Naive thymus-derived CD4-positive, alpha-beta T cell (primary cell): ENCODE measurements at regions of chr4 and their contacts with region 1.

Region 1: DNA sequence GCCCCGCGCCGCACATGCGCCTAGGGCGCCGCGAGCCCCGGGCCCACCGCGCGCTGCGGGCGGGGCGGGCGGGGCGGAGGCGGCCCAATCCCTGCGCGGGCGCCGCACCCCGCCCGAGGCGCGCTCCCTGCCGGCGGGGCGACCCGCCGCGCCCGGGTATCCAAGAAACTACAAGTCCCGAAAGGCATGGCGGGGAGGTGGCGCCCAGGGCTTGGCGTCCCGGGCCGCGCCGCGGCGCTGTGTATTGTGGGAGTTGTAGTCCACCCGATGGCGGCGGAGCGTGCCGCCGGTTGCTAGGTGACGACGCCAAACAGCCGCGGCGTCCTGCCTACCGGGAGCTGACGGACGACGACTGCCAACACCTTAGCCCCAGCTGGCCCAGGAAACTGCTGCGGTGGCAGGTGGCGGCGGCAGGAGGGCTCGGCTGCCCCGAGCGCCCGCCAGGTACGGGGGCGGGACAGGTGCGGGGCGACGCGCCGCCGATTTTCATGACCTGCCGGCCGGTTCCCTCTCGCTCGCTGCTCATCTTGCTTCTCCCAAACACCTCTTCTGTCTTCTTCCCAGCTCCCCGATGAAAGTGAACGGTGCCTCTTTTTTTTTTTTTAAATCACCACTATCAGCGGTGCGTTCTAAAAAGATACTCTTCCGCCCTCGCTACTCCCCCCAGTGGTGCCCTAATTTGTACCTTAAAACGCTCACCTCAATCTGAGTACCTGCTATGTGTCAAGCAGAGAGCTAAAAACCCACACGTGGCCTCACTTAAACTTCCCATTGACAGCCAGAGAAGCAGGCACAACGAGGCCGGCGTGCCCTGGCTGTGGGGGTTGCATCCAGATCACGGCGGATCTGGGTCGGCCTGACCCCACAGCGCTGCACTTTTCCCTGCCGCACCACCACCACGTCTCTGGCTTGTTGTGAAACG is at the start of gene CFAP99:
- DNase-seq: peak; percentile 89 to 97 (median 93)
- ATAC-seq: peak; percentile 95
- H3K4me3 ChIP-seq: peak within 1 kb of the TSS; percentile 70
- H3K4me3 Mint-ChIP-seq: peak within 1 kb of the TSS; percentile 85 to 98 (median 92)
- H3K27ac ChIP-seq: peak within 1 kb of the TSS; percentile 73
- H3K27ac Mint-ChIP-seq: peak within 1 kb of the TSS; percentile 81 to 98 (median 90)
- H3K4me1 ChIP-seq: peaks cover 24 to 28% of the 10 kb centered on the region in 2 donors
- H3K4me1 Mint-ChIP-seq: peaks cover 33 to 46% (median 40%) of the 10 kb centered on the region in 7 donors
- H3K27me3 ChIP-seq: no peaks in the 10 kb centered on the region
- H3K27me3 Mint-ChIP-seq: peaks cover 8 to 67% (median 13%) of the 10 kb centered on the region in 5 donors
- total RNA-seq, gene CFAP99: 0.12 to 0.27 TPM in 2 of 5 experiments, not detected in the others

Region 2: DNA sequence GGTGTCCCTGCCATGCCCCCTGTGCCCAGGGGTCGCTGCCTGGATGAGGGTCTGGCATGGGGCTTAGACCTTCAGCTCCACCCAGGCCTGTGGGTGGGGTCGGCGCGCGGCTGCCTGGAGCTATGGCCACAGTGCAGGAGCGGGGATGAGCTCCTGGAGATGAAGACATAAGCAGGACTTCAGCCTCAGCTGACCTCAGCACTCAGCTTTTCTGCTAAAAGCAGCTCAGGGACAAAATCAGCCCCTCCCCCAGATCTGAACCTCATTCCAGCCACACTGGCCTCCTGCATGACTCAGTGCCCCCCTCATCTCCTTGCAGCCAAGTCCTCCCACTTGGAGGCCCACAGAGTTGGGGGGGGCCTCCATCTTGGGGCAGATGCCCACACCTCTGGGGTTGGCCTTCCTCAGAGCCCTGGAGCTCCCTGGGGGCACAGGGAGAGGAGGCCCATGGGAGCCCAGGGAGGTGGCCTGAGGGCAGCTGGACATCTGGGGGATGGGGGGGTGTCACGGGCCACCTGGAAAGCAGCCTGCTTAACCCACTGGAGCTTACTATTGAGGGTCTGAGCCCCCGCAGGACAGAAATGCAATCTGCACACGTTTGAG is 1573.6 kb before region 1 on chr4:
- CTCF ChIA-PET with region 1: no interaction called
- POLR2A ChIA-PET with region 1: no interaction called
- intact Hi-C with region 1: no loop called
- DNase-seq: no peak
- ATAC-seq: no peak
- H3K4me3 ChIP-seq: no peak overlapping the region
- H3K4me3 Mint-ChIP-seq: no peak overlapping the region
- H3K27ac ChIP-seq: no peak overlapping the region
- H3K27ac Mint-ChIP-seq: no peak overlapping the region
- H3K4me1 ChIP-seq: no peaks in the 10 kb centered on the region
- H3K4me1 Mint-ChIP-seq: no peaks in the 10 kb centered on the region
- H3K27me3 ChIP-seq: no peaks in the 10 kb centered on the region
- H3K27me3 Mint-ChIP-seq: no peaks in the 10 kb centered on the region

Region 3: DNA sequence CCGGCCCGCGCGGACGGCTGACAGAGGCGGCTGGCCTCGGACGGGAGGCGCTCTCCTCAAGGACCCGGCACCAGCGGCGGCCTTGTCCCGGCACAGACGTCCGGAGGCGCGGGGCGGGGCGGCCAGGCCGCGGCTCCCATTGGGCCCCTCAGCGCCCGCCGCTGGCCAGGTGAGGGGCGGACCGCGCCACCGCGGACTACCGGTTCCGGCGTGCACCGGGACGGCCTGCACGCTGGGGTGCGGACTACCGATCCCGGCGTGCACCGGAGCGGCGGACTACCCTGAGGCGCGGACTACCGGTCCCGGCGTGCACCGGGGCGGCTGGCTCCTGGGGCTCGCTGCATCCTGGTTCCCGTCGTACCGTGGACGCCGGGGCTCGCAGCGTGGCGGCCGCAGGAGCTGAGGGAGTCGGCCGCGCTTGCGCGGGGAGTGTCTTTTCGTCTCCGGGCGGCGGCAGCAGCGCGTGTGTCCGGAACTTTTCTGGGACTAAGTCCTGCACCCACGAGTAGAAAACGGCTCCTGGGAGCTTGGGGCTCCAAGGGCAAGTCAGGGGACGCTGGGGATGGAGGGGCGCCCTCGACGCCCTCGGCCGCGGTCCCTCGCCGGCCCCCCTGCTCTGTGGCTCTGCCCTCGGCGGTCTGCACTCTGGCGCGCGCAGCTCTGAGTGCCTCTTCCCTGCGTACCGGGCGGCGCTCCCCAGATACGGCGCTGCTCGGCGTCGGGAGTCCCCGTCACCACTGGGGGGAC is 562.7 kb before region 1 on chr4 and contains the start of gene LETM1:
- CTCF ChIA-PET with region 1: no interaction called
- POLR2A ChIA-PET with region 1: interaction called, 3 read pairs
- intact Hi-C with region 1: loop called (anchors 1 kb)
- DNase-seq: peak; percentile 79 to 96 (median 88)
- ATAC-seq: peak; percentile 98
- H3K4me3 ChIP-seq: peak within 1 kb of the TSS; percentile 86
- H3K4me3 Mint-ChIP-seq: peak within 1 kb of the TSS; percentile 67 to 88 (median 83)
- H3K27ac ChIP-seq: peak within 1 kb of the TSS; percentile 70
- H3K27ac Mint-ChIP-seq: peak within 1 kb of the TSS in 8 of 9 donors; percentile 17 to 80 (median 48)
- H3K4me1 ChIP-seq: peaks cover 10 to 14% of the 10 kb centered on the region in 2 donors
- H3K4me1 Mint-ChIP-seq: peaks cover 31 to 45% (median 41%) of the 10 kb centered on the region in 7 donors
- H3K27me3 ChIP-seq: no peaks in the 10 kb centered on the region
- H3K27me3 Mint-ChIP-seq: no peaks in the 10 kb centered on the region
- total RNA-seq, gene LETM1: 29.5 to 56.4 (median 36.0) TPM

Region 4: DNA sequence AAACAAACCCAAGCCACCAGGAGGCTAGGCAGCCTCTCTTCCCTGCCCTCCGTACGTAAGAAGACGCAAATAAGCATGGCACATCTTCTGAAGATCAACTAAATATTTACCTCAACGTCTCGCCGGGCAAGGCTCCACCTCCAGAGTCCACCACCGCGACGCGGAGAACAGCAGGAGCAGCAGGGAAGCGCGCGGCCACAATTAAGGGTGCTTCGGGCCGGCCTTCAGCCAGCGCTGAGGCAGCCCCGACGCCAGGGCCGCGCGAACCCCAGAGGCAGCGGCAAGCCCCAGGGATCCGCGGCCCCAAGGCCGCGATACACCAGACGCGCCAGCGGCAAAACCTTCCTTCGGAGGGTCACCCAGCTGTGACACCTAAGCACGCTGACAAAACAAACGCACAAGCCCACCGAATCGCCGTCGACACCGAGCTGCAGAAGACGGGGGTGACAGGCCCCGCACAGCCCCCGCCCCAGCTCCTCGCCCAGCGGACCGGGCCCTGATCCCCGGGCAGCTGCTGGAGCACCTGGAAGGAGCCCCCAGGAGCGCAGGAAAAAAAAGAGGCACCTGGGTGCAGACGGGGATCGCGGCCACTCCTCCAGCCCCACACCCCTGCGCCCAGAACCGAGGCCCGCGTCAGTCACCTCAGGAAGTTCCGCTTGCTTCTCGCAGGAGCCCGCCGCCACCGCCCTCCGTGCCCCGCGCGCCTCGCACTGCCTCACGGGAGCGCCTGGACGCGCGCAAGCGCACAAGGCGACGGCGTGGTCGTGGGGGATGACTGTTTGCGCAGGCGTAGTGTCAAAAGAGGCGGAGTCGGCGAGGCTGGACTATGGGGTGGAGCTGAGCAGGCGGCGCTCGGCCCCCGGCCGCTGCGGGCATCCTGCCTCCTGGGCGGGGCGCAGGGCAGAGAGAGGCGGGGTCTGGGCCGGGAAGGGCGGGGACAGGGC is 177.2 kb before region 1 on chr4 and contains the starts of genes HAUS3 and POLN:
- CTCF ChIA-PET with region 1: no interaction called
- POLR2A ChIA-PET with region 1: interaction called, 4 read pairs
- intact Hi-C with region 1: loop called (anchors 1 kb)
- DNase-seq: peak; percentile 96 to 100 (median 99)
- ATAC-seq: peak; percentile 97
- H3K4me3 ChIP-seq: peak within 1 kb of the TSS; percentile 93
- H3K4me3 Mint-ChIP-seq: peak within 1 kb of the TSS; percentile 80 to 95 (median 91)
- H3K27ac ChIP-seq: peak within 1 kb of the TSS; percentile 89
- H3K27ac Mint-ChIP-seq: peak within 1 kb of the TSS; percentile 83 to 95 (median 90)
- H3K4me1 ChIP-seq: peaks cover 37 to 38% of the 10 kb centered on the region in 2 donors
- H3K4me1 Mint-ChIP-seq: peaks cover 48 to 65% (median 60%) of the 10 kb centered on the region in 7 donors
- H3K27me3 ChIP-seq: no peaks in the 10 kb centered on the region
- H3K27me3 Mint-ChIP-seq: peaks cover 0 to 6% (median 0%) of the 10 kb centered on the region in 5 donors
- total RNA-seq, gene HAUS3: 24.4 to 88.2 (median 34.1) TPM
- total RNA-seq, gene POLN: 2.4 to 5.4 (median 3.2) TPM

Region 5: DNA sequence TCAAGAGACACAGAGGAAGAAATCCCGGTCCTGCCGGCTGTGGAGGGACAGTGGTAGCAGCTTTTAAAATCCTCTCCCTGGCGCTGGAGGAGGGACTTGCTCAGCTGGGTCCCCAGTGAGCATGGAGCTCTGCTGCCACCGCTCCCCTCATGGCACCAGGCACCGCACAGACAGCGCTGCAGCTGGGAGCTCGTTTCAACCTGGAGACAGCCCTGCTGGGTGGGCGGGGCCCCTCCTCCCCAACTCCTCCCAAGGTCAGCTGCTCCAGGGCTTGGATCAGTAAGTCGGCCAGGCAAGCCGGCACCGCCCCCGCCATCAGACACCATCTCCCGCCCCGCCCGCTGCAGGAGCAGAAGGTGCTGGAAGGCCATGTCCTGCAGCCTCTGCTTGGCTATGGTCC is 16.9 kb before region 1 on chr4:
- CTCF ChIA-PET with region 1: interaction called, 3 read pairs
- POLR2A ChIA-PET with region 1: interaction called, 27 read pairs
- intact Hi-C with region 1: loop called in 1 of 2 experiments (anchors 2 kb)
- DNase-seq: peak in 2 of 9 donors; percentile 19 to 26
- ATAC-seq: peak; percentile 59
- H3K4me3 ChIP-seq: peak overlapping the region; percentile 53
- H3K4me3 Mint-ChIP-seq: peak overlapping the region; percentile 55 to 87 (median 83)
- H3K27ac ChIP-seq: no peak overlapping the region
- H3K27ac Mint-ChIP-seq: peak overlapping the region in 5 of 9 donors; percentile 43 to 86 (median 75)
- H3K4me1 ChIP-seq: peaks cover 16% of the 10 kb centered on the region in 2 donors
- H3K4me1 Mint-ChIP-seq: peaks cover 13 to 41% (median 28%) of the 10 kb centered on the region in 7 donors
- H3K27me3 ChIP-seq: no peaks in the 10 kb centered on the region
- H3K27me3 Mint-ChIP-seq: peaks cover 0 to 10% (median 0%) of the 10 kb centered on the region in 5 donors

Region 6: DNA sequence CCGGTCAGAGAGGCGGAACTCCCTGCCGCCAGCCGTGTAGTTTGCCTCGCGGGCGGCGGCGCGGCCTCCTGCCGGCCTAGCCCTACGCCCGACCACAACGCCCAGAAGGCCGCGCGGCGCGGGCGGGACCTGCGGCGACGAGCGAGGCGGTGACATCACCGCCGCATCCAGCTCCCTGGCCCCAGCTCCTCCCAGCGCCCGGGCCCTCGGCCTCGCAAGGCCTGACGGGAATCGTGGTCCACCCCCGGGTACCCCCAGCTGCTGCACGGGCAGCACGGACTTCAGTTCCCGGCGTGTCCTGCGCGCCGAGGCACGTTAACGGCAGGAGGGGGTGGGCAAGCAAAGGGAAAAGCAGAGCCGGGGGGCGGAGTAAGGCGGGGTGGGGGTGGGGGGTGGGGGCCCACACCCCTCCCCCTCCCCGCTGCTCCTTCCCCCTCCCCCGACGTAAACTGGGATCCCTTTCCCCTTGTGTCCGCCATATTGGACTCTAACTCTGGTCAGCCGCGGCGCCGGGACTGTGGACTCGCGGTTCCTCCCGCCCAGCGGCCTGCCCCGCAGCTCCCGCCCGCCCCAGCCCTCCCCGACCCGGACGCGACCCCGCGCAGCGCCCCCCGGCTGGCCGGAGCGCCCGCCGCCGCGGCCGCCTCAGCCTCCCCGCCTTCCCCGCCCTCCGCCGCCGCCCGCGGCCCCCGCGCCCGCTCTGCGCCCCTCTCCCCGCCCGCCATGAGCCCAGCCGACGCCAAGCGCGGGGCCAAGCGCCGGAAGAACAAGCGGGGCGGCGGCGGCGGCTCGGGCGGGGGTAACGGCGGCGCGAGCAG is 117.5 kb after region 1 on chr4 and contains the start of gene FAM193A:
- CTCF ChIA-PET with region 1: interaction called, 3 read pairs
- POLR2A ChIA-PET with region 1: interaction called, 3 read pairs
- intact Hi-C with region 1: loop called (anchors 1 kb)
- DNase-seq: peak; percentile 93 to 99 (median 99)
- ATAC-seq: peak; percentile 96
- H3K4me3 ChIP-seq: peak within 1 kb of the TSS; percentile 58
- H3K4me3 Mint-ChIP-seq: peak within 1 kb of the TSS; percentile 87 to 95 (median 92)
- H3K27ac ChIP-seq: peak within 1 kb of the TSS; percentile 92
- H3K27ac Mint-ChIP-seq: peak within 1 kb of the TSS; percentile 86 to 98 (median 92)
- H3K4me1 ChIP-seq: peaks cover 11 to 15% of the 10 kb centered on the region in 2 donors
- H3K4me1 Mint-ChIP-seq: peaks cover 5 to 36% (median 19%) of the 10 kb centered on the region in 7 donors
- H3K27me3 ChIP-seq: no peaks in the 10 kb centered on the region
- H3K27me3 Mint-ChIP-seq: no peaks in the 10 kb centered on the region
- total RNA-seq, gene FAM193A: 32.8 to 47.2 (median 44.1) TPM

Region 7: GRCh38 chr4:3074078-3074795 is 655.3 kb after region 1 on chr4 and contains the starts of genes HTT and HTT-AS:
- CTCF ChIA-PET with region 1: no interaction called
- POLR2A ChIA-PET with region 1: no interaction called
- intact Hi-C with region 1: loop called (anchors 2 to 5 kb)
- DNase-seq: peak; percentile 91 to 99 (median 96)
- ATAC-seq: peak; percentile 90
- H3K4me3 ChIP-seq: peak within 1 kb of the TSS; percentile 87
- H3K4me3 Mint-ChIP-seq: peak within 1 kb of the TSS; percentile 86 to 98 (median 90)
- H3K27ac ChIP-seq: peak within 1 kb of the TSS; percentile 89
- H3K27ac Mint-ChIP-seq: peak within 1 kb of the TSS; percentile 70 to 95 (median 93)
- H3K4me1 ChIP-seq: peaks cover 10 to 16% of the 10 kb centered on the region in 2 donors
- H3K4me1 Mint-ChIP-seq: peaks cover 17 to 35% (median 30%) of the 10 kb centered on the region in 7 donors
- H3K27me3 ChIP-seq: no peaks in the 10 kb centered on the region
- H3K27me3 Mint-ChIP-seq: no peaks in the 10 kb centered on the region
- total RNA-seq, gene HTT: 61.4 to 115 (median 72.5) TPM
- total RNA-seq, gene HTT-AS: not detected